Heart left ventricle (tissue), 16 donors: ENCODE measurements at regions of chr10 and their contacts with region 1.

Region 1: DNA sequence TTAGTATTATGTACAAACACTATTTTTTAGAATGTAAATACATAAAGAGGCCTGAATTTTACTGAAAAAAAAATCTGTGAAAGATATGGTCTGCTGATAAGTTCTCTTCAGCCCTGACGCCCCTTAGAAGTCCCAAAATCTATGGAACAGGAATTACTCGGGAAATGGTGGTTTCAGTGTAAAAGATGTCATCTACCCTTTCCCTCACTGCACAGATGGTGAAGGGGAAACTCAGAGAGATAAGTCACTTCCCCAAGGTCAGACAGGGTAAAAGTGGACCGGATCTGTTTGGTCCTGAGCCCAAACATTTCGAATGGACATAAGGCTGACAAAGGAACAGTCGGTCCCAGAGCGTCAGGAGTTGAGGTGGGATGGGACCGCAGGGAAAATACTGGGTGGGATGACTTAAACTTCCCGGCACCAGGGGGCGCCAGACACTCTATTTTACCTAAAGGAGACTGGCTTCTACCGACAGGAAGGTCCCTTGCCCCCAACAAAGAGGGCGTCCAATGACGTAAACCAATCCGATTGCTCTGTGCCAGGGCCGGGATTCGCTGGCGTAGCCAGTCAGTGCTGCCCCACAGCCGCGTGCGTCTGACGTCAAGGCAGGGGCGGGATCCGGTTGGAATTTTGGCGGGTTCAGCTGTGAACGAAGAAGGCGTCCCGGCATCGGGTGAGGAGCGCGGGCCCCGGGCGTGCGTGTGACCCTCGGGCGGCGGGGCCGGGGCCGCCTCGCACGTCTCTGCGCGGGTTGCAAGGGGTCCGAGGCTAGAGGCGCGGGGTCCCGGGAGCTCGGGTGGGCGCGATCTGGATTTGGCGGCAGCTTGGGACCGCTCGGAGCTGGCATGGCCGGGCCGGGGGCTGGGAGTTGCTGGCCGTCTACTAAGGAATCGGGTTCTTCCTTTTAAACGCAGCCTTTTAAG is at the start of gene MCM10:
- DNase-seq: peak; percentile 97 to 98 (median 98)
- ATAC-seq: peak; percentile 100
- H3K4me3 ChIP-seq: peak within 1 kb of the TSS in 11 of 12 donors; percentile 24 to 72 (median 51)
- H3K27ac ChIP-seq: no peak within 1 kb of the TSS
- H3K4me1 ChIP-seq: peaks cover 0 to 18% (median 9%) of the 10 kb centered on the region in 12 donors
- H3K27me3 ChIP-seq: no peaks in the 10 kb centered on the region
- CTCF ChIP-seq: peak; percentile 82 to 95 (median 88)
- POLR2A ChIP-seq: no peak
- total RNA-seq, gene MCM10: 0.16 to 4.2 (median 0.36) TPM in 6 of 9 donors, not detected in the others

Region 2: GRCh38 chr10:13299437-13300287 is 138.5 kb after region 1 on chr10 and contains the start of gene PHYH:
- intact Hi-C with region 1: loop called in 7 of 10 experiments (anchors 1 to 10 kb)
- DNase-seq: peak; percentile 92 to 96 (median 94)
- ATAC-seq: peak; percentile 87 to 95 (median 90)
- H3K4me3 ChIP-seq: peak within 1 kb of the TSS; percentile 59 to 90 (median 78)
- H3K27ac ChIP-seq: peak within 1 kb of the TSS; percentile 96 to 100 (median 100)
- H3K4me1 ChIP-seq: peaks cover 0 to 31% (median 19%) of the 10 kb centered on the region in 12 donors
- H3K27me3 ChIP-seq: no peaks in the 10 kb centered on the region
- CTCF ChIP-seq: peak in 2 of 12 donors; percentile 9 to 10
- POLR2A ChIP-seq: peak; percentile 55 to 96
- total RNA-seq, gene PHYH: 70.9 to 181 (median 157) TPM

Region 3: GRCh38 chr10:13440185-13441061 is 279.2 kb after region 1 on chr10:
- intact Hi-C with region 1: loop called in 4 of 10 experiments (anchors 5 to 10 kb)
- DNase-seq: peak; percentile 21 to 68 (median 45)
- ATAC-seq: peak; percentile 49 to 93 (median 82)
- H3K4me3 ChIP-seq: peak overlapping the region in 11 of 12 donors; percentile 1 to 50 (median 36)
- H3K27ac ChIP-seq: no peak overlapping the region
- H3K4me1 ChIP-seq: peaks cover 0 to 15% (median 13%) of the 10 kb centered on the region in 12 donors
- H3K27me3 ChIP-seq: peaks cover 0 to 29% (median 12%) of the 10 kb centered on the region in 9 donors
- CTCF ChIP-seq: peak; percentile 73 to 94 (median 85)
- POLR2A ChIP-seq: no peak

Region 4: DNA sequence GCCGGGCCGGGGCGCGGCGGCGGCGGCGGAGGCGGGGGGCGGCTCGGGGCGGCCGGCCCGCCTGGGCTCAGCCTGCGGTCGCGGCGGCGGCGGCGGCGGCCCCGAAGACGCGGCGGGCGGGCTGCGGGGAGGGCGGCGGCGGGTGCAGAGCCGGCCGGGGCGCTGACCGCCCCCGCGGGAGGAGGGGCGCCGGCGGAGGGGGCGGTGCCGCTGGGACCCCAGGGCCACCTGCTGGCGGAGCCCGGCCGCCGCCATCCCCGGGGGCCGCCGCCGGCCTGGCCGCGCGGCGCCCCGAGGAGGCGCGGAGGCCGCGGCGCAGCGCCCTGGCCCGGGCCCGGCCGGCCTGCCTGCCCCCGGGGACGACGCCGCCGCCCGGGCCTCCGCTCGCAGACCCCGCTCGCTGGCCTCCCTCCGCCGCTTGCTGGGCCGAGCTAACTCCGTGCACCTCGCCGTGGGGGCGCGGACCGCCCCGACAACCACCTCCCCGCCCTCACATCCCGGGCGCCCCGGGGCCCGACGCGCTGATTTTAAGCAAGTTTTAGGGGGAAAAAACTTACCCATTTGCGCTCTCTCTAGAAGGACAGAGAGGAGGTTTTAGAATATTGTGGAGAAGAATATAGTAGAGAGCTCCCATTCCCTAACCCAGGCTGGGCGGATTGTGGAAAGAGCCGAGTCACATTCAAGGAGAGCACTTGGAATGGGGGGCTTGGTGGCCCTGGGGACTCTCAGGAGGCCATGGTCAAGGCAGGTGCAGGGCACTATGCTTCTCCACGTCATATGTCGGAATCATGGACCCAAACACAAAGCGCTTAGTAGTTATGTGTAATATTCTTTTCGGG is 367.9 kb after region 1 on chr10 and contains the start of gene BEND7:
- intact Hi-C with region 1: loop called in 3 of 10 experiments (anchors 10 kb)
- DNase-seq: peak; percentile 54 to 71 (median 58)
- ATAC-seq: peak in 3 of 4 donors; percentile 88 to 92 (median 90)
- H3K4me3 ChIP-seq: peak within 1 kb of the TSS; percentile 44 to 84 (median 70)
- H3K27ac ChIP-seq: peak within 1 kb of the TSS; percentile 42 to 82 (median 68)
- H3K4me1 ChIP-seq: peaks cover 0 to 24% (median 15%) of the 10 kb centered on the region in 12 donors
- H3K27me3 ChIP-seq: peaks cover 0 to 28% (median 0%) of the 10 kb centered on the region in 9 donors
- CTCF ChIP-seq: no peak
- POLR2A ChIP-seq: no peak
- total RNA-seq, gene BEND7: 9.5 to 30.5 (median 13.0) TPM